ENCODE measurements at regions of chr2 and their contacts with region 1.

Region 1: GRCh38 chr2:20430461-20431300 is 16.2 kb upstream of the RHOB start:
- DNase-seq: peak; percentile 60
- H3K4me3 Mint-ChIP-seq: no peak overlapping the region
- H3K27ac Mint-ChIP-seq: no peak overlapping the region
- H3K4me1 Mint-ChIP-seq: peaks cover 14% of the 10 kb centered on the region
- H3K27me3 Mint-ChIP-seq: no peaks in the 10 kb centered on the region

Region 2: GRCh38 chr2:20264629-20265028 is 166.1 kb before region 1 on chr2:
- CTCF ChIA-PET with region 1: no interaction called
- intact Hi-C with region 1: no loop called
- DNase-seq: no peak
- H3K4me3 Mint-ChIP-seq: no peak overlapping the region
- H3K27ac Mint-ChIP-seq: no peak overlapping the region
- H3K4me1 Mint-ChIP-seq: peaks cover 4% of the 10 kb centered on the region
- H3K27me3 Mint-ChIP-seq: no peaks in the 10 kb centered on the region

Region 3: DNA sequence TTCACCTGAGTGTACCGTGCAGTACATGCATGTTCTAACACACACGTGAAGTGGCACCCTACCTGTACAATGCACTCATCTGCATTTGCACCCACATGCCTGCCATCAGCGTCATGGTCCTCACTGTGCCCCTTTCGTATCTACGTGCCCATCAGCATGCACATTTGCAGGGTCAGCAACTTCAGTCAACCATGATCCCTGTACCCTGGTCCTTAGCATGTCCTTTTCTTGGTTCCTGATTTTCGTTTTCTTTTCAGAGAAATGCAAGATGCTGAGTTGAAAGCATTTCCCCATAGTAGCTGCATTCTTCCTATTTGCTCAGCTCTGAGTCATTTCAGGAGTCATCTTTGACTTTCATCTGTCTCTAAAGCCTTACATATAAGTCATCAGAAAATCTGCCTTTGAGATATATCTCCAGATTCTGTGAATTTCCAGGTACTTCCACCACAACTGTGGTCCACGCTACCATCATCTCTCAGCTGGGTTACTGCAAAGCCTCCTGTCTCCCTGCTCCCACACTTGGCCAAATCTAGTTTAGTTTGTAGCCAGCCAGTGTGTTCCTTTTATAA is 65.3 kb before region 1 on chr2:
- CTCF ChIA-PET with region 1: interaction called, 4 read pairs
- intact Hi-C with region 1: loop called (anchors 1 kb)
- DNase-seq: peak; percentile 84
- H3K4me3 Mint-ChIP-seq: no peak overlapping the region
- H3K27ac Mint-ChIP-seq: peak overlapping the region; percentile 54
- H3K4me1 Mint-ChIP-seq: peaks cover 25% of the 10 kb centered on the region
- H3K27me3 Mint-ChIP-seq: peaks cover 11% of the 10 kb centered on the region

Region 4: DNA sequence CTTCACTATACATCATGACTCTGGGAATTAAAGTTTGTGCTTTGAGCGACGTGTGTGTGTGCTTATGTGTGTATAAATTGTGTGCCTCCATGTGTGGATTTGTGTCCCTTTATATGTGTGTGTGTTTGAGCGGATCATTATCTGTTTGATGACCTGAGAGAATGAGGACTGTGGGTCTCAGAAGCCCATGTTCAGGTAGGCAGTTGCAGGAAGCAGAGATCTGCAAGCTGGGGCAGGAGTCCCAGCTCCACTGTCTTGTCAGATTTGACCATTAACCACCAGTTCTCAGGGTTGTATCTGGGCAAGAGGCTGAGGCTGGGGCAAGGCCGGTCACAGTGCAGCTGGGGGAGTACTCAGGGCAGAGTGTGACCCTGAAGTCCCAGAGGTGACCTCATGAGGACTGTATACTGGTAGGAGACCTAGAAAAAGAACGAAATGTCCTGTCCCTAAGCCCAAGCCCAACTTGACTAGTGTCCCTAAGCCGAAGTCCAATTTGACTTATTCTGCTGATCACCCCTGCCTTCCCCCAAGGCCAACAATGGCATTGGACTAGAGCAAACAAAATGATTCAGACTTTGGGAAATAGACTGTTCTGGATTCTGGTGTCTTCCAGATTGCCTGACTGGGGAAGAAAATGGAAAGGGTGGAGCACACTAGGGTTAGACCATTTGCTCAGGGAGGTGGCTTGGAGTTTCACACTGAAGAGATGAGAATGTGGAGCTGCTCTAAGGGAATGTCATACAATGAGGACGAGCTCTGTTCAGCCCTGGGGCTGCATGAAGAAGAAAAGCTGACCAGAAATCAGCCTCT is 44.3 kb after region 1 on chr2:
- CTCF ChIA-PET with region 1: no interaction called
- intact Hi-C with region 1: no loop called
- DNase-seq: no peak
- H3K4me3 Mint-ChIP-seq: no peak overlapping the region
- H3K27ac Mint-ChIP-seq: no peak overlapping the region
- H3K4me1 Mint-ChIP-seq: no peaks in the 10 kb centered on the region
- H3K27me3 Mint-ChIP-seq: no peaks in the 10 kb centered on the region

Measured in activated naive CD4-positive, alpha-beta T cell treated with anti-CD3 and anti-CD28 coated beads for 36 hours (primary cell).